ENCODE measurements at regions of chr1 and their contacts with region 1.

Region 1: DNA sequence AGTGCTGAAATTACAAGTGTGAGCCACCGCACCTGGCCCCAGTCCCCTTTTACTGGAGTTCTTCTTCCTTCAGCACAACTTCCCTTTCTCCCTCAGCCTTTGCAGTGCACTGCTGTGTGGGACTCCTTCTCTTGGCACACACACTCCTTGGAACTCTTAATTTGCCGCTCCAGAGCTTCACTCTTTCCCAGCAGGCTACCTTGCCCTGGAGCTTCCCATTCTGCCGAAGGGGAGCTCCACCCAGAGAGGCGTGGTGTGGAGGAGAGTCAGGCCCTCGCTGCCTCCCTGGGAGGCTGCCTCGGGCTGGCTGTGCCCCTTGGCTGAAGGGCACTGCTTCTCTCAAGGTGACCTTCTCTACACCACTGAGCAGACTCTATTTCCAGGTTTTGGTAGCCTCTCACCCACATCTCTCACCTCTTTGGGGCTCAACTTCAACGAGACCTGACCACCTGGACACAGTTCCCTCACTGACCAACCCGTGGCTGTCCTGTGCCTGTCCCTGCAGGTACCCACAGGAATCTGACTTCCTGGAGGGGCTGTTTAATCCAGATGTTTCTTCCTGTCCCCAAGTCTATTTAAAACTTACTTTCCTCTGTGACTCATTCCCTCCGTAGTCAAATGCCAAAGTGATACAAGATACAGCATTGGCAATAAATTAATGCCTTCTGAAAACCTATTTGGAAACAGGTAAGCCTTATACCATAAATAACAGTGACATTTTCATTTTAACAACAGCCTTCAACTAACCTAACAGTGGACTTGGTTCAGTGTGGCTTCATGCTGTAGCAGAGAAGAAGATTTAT is 227.4 kb upstream of the KIAA0040 start:
- DNase-seq: no peak
- H3K4me3 ChIP-seq: no peak overlapping the region
- CTCF ChIP-seq: no peak

Region 2: DNA sequence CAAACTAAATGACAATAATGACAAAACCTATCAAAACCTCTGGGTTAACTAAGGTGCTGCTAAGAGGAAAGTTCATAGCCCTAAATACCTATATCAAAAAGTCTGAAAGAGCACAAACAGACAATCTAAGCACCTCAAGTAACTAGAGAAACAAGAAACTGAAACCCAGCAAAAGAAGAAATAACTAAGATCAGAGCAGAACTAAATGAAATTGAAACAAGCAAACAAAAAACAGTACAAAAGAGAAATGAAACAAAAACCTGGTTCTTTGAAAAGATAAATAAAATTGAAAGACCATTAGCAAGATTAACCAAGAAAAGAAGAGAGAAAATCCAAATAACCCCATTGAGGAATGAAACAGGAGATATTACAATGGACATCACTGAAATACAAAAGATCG is 182.6 kb before region 1 on chr1:
- in situ Hi-C with region 1: no loop called
- DNase-seq: no peak
- H3K4me3 ChIP-seq: no peak overlapping the region
- CTCF ChIP-seq: no peak

Region 3: DNA sequence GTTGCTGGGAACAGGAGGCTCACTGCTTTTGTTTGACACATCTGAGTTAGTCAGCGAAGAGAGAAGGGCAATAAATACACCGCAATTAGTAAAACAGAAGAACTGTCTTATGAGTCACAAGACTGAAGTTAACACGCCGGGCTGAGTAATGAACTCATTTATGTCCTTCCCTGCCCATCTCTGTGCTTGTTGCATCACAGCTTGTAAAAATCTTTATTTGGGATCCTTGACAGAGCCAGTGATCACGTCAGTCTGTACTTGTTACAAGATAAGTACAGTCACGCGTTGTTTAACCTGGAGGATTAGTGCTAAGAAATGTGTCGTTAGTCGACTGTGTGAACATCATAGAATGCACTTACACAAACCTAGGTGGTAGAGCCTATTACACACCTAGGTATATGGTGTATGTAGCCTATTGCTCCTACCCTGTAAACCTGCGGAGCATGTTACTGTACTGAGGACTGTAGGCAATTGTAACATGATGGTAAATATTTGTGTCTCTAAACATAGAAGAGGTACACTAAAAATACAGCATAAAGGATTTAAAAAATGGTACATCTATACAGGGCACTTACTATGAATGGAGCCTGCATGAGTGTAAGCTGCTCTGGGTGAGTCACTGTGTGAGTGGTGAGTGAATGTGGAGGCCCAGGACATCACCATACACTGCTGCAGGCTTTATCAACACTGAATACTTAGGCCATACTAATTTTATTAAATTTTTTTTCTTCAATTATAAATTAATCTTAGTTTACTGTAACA is 51.3 kb after region 1 on chr1:
- in situ Hi-C with region 1: loop called (anchors 5 kb)
- DNase-seq: no peak
- H3K4me3 ChIP-seq: no peak overlapping the region
- CTCF ChIP-seq: no peak